GM12878 (cell line): ENCODE measurements at regions of chr9 and their contacts with region 1.

Region 1: GRCh38 chr9:114096041-114096511 is 3.0 kb downstream of the KIF12 start:
- DNase-seq: no peak
- ATAC-seq: no peak
- H3K4me3 ChIP-seq: no peak overlapping the region
- H3K27ac ChIP-seq: no peak overlapping the region
- H3K4me1 ChIP-seq: no peaks in the 10 kb centered on the region
- H3K27me3 ChIP-seq: no peaks in the 10 kb centered on the region; a peak in 2 of 4 replicates
- CTCF ChIP-seq: peak in 1 of 3 experiments; percentile 9; a peak in 1 of 6 replicates
- EP300 ChIP-seq: no peak
- POLR2A ChIP-seq: no peak
- RAD21 ChIP-seq: no peak

Region 2: GRCh38 chr9:113868501-113868900 is 227.6 kb before region 1 on chr9:
- CTCF ChIA-PET with region 1: no interaction called
- POLR2A ChIA-PET with region 1: no interaction called
- RAD21 ChIA-PET with region 1: no interaction called
- SMC1A ChIA-PET with region 1: no interaction called
- in situ Hi-C with region 1: no loop called
- intact Hi-C with region 1: no loop called
- DNase-seq: no peak
- ATAC-seq: no peak
- H3K4me3 ChIP-seq: no peak overlapping the region
- H3K27ac ChIP-seq: no peak overlapping the region
- H3K4me1 ChIP-seq: no peaks in the 10 kb centered on the region
- H3K27me3 ChIP-seq: no peaks in the 10 kb centered on the region; a peak in 1 of 4 replicates
- CTCF ChIP-seq: no peak
- EP300 ChIP-seq: no peak
- POLR2A ChIP-seq: no peak
- RAD21 ChIP-seq: no peak

Region 3: DNA sequence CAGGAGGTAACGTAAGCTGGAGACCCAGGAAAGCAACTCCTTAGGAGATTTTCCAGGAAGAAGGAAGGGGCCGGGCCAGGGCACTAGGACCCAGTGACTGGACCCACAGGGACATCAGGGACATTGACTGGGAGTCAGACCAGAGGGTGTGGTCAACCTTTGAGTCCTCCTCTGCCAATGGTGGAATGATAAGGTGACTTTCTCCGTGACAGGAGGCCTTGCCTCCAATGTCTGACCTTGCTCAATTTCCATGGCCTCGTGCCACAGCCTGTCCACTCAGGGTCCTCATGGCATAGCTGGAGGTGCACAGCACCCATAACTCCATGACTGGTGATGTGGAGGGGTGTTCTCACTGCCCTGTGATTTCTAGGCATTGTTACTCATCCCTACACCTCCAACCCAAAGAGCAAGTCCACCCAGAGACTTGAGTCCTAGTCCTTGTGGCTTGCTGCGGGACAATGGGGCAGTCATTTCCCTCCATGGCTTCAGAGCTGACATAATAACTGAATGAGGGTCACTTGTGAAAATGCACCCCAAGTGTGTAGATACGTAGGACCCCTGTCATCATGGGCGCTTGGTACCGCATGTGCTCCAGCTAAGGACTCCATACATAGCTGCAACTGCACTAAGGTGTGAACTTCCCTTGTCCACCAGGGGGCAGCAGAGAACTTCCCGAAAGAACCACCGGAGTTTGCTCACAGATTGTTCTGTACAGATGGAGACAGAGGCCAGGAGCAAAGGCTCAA is 13.9 kb before region 1 on chr9:
- CTCF ChIA-PET with region 1: interaction called, 19 read pairs
- POLR2A ChIA-PET with region 1: no interaction called
- RAD21 ChIA-PET with region 1: no interaction called
- SMC1A ChIA-PET with region 1: interaction called, 3 read pairs
- in situ Hi-C with region 1: no loop called
- intact Hi-C with region 1: no loop called
- DNase-seq: peak; percentile 25
- ATAC-seq: peak; percentile 99
- H3K4me3 ChIP-seq: no peak overlapping the region
- H3K27ac ChIP-seq: no peak overlapping the region
- H3K4me1 ChIP-seq: no peaks in the 10 kb centered on the region
- H3K27me3 ChIP-seq: peaks cover 0 to 5% of the 10 kb centered on the region in 2 experiments; a peak in 3 of 4 replicates
- CTCF ChIP-seq: peak; percentile 84 to 93 (median 87)
- EP300 ChIP-seq: no peak
- POLR2A ChIP-seq: no peak
- RAD21 ChIP-seq: peak; percentile 67